A673 (cell line): ENCODE measurements at regions of chr6 and their contacts with region 1.

Region 1: GRCh38 chr6:10800829-10801535 is 37.4 kb downstream of the MAK start:
- DNase-seq: peak; percentile 64
- H3K4me3 ChIP-seq: no peak overlapping the region
- H3K27ac ChIP-seq: no peak overlapping the region
- H3K4me1 ChIP-seq: no peaks in the 10 kb centered on the region
- H3K27me3 ChIP-seq: no peaks in the 10 kb centered on the region
- CTCF ChIP-seq: peak; percentile 99

Region 2: DNA sequence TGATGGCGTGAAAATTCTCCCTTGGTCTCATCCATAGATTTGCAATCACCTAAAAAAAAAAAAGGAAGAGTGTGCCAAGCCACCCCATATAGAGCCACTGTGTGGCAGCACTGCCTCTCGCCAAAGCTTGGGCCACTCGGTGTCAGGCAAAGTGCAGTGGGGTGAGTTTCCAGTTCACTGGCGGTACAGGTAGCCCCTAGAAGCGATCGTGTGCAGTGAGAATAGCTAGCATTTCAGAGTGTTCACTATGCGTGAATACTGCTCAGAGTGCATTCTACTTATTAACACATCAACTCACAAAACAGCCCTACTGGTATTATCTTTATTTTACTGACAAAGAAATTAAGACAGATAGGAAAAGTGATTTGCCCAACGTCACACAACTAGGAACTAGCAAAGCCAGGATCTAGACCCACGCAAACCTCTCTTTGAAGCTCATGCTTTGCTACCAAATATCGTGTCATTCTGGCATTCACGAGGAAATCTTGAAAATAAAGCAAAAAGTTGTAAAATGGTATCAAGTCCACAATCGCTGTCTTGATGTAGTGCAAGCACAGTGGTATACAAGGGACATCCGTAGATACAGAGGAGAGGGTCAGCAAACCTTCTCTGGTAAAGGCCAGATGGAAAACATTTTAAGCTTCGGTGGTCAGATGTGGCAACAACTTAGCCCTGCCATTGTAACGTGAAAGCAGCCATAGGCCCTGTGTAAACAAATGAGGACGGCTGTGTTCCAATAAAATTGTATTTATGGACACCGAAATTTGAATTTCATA is 290.2 kb before region 1 on chr6:
- CTCF ChIA-PET with region 1: no interaction called
- POLR2A ChIA-PET with region 1: interaction called, 3 read pairs
- intact Hi-C with region 1: loop called (anchors 1 kb)
- DNase-seq: peak; percentile 42
- H3K4me3 ChIP-seq: no peak overlapping the region
- H3K27ac ChIP-seq: no peak overlapping the region
- H3K4me1 ChIP-seq: no peaks in the 10 kb centered on the region
- H3K27me3 ChIP-seq: no peaks in the 10 kb centered on the region
- CTCF ChIP-seq: peak; percentile 71